ENCODE measurements at regions of chr12 and their contacts with region 1.

Region 1: DNA sequence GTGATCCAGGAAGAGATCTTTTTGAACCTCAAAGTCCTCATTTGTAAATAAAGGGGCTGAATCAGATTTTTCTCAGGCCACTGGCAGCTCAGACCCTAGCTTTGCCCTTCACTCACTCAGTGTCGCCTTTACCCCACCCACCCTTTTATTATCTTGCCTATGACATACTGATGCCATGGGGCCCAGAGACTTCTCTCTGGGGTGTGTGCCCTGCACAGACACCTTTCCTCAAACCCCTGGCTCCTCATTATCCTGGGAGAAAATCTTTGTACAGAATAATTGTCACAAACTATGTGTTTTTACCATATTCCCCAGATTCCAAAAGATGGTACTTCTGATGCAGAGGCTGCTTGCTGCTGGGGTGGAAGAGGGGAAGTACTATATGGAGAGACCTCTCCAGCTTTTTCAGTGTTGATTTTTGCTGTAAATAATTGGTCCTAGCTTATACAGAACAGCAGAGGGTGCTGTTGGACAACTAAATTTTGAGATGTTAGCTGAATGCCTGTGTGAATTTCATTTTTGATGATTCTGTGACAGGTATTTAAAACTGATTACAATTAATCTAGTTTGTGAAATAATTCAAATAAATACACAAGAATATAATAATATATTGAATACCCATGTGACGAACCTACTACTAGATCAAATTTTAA is 53.9 kb upstream of the DCD start:
- DNase-seq: no peak
- ATAC-seq: peak; percentile 80
- H3K4me3 ChIP-seq: no peak overlapping the region
- H3K27ac ChIP-seq: no peak overlapping the region
- H3K4me1 ChIP-seq: no peaks in the 10 kb centered on the region
- H3K27me3 ChIP-seq: no peaks in the 10 kb centered on the region; a peak in 3 of 4 replicates
- CTCF ChIP-seq: peak; percentile 49 to 64 (median 52); a peak in 4 of 6 replicates
- EP300 ChIP-seq: no peak
- POLR2A ChIP-seq: no peak
- RAD21 ChIP-seq: peak; percentile 68

Region 2: DNA sequence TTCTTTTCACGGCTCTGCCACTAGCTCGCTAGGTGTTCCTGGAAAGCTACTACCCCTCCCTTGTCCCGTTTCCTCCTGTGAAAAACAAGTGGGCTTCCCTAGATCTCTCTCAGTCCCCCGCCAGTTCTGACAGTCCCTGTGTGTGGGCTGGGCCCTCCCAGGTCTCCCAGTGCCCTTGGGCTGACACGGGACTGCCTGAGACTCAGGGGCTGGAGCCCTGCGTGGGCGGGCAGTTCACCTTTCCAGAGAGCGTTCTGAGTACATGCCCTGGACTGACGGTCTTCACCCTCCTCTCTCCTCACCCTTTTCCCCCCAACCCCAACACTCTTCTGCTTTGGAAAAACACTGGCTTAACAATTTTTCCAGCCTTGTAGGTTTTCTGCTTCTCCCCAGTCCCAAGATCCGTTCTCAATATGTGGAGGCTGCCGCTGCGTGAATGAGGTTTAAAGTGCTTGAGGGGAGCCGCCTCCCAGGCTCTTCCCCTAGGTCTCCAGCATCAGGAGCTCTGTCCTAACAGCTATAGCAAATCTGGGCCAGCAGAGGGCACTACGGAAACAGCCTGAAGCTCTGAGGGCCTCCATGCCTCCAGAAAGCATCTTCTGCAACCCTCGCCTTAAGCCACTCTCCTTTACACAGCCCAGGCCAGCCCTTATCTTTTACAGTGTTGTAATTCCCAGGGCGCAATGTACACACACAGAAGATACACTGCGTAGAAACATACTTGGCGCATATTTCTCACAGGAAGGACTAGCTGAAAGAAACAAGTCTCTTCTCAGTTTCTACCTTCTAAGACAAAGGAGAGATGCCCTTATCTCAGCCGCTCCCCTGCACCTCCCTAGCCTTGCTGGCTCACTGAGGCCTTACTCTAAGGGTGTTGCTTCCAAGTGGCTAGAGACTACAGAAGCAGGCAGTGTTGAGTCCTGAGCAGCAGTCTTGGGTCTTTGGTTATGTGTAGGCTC is 43.5 kb before region 1 on chr12:
- CTCF ChIA-PET with region 1: interaction called, 13 read pairs
- POLR2A ChIA-PET with region 1: no interaction called
- RAD21 ChIA-PET with region 1: interaction called, 15 read pairs
- SMC1A ChIA-PET with region 1: interaction called, 3 read pairs
- in situ Hi-C with region 1: no loop called
- intact Hi-C with region 1: no loop called
- DNase-seq: no peak
- ATAC-seq: peak; percentile 93
- H3K4me3 ChIP-seq: no peak overlapping the region
- H3K27ac ChIP-seq: no peak overlapping the region
- H3K4me1 ChIP-seq: no peaks in the 10 kb centered on the region
- H3K27me3 ChIP-seq: peaks cover 0 to 2% of the 10 kb centered on the region in 2 experiments; a peak in 2 of 4 replicates
- CTCF ChIP-seq: peak; percentile 68 to 81 (median 70)
- EP300 ChIP-seq: no peak
- POLR2A ChIP-seq: no peak
- RAD21 ChIP-seq: peak; percentile 51

Region 3: DNA sequence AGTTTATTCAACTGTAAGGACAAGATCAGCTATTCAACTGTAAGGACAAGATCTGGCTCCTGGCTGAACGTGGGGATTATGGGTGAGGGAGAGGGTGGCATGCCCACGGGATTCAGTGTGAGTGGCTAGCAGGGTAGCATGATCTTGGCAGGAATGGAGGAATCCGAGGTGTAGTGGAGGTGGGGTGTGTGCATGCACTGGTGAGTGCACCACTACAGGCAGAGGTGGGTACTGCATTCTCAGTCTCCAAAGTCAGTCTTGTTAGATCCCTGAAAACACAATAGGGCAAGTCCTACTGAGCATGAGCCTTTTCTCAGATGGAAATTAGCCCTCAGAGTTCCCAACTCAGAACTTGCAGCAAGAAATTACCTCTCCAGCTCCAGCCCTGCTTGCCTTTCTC is 21.7 kb before region 1 on chr12:
- CTCF ChIA-PET with region 1: interaction called, 26 read pairs
- POLR2A ChIA-PET with region 1: no interaction called
- RAD21 ChIA-PET with region 1: no interaction called
- SMC1A ChIA-PET with region 1: interaction called, 3 read pairs
- in situ Hi-C with region 1: no loop called
- intact Hi-C with region 1: no loop called
- DNase-seq: no peak
- ATAC-seq: peak; percentile 94
- H3K4me3 ChIP-seq: no peak overlapping the region
- H3K27ac ChIP-seq: no peak overlapping the region
- H3K4me1 ChIP-seq: no peaks in the 10 kb centered on the region
- H3K27me3 ChIP-seq: no peaks in the 10 kb centered on the region; a peak in 2 of 4 replicates
- CTCF ChIP-seq: peak; percentile 45 to 75 (median 55)
- EP300 ChIP-seq: no peak
- POLR2A ChIP-seq: no peak
- RAD21 ChIP-seq: no peak

Region 4: GRCh38 chr12:54689984-54690383 is 12.1 kb before region 1 on chr12:
- CTCF ChIA-PET with region 1: interaction called, 42 read pairs
- POLR2A ChIA-PET with region 1: no interaction called
- RAD21 ChIA-PET with region 1: interaction called, 3 read pairs
- SMC1A ChIA-PET with region 1: interaction called, 10 read pairs
- in situ Hi-C with region 1: no loop called
- intact Hi-C with region 1: no loop called
- DNase-seq: no peak
- ATAC-seq: peak; percentile 44; the same call in 2 of the 3 replicates
- H3K4me3 ChIP-seq: no peak overlapping the region
- H3K27ac ChIP-seq: no peak overlapping the region
- H3K4me1 ChIP-seq: no peaks in the 10 kb centered on the region
- H3K27me3 ChIP-seq: peaks cover 0 to 10% of the 10 kb centered on the region in 2 experiments; a peak in 2 of 4 replicates
- CTCF ChIP-seq: peak; percentile 9 to 24 (median 12); a peak in 3 of 6 replicates
- EP300 ChIP-seq: no peak
- POLR2A ChIP-seq: no peak
- RAD21 ChIP-seq: no peak

Region 5: DNA sequence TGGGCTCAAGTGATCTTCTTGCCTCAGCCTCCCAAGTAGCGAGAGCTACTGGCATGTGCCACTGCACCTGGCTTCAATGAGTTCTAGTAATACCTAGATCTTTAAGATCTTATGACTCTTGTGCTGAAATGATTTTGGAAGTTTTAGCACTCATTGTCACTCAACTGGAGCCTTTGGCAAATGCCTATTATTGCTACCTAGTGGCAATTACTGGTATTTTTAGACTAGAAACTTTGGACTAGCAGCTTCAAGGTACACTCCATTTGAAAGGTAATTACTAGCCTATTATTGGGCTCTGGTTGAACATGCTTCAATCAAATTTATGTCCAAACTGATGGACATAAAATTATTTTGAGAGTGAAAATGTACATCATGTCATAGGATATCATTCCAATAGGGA is 71.5 kb after region 1 on chr12:
- CTCF ChIA-PET with region 1: no interaction called
- POLR2A ChIA-PET with region 1: no interaction called
- RAD21 ChIA-PET with region 1: no interaction called
- SMC1A ChIA-PET with region 1: no interaction called
- in situ Hi-C with region 1: no loop called
- intact Hi-C with region 1: no loop called
- DNase-seq: no peak
- ATAC-seq: no peak
- H3K4me3 ChIP-seq: no peak overlapping the region
- H3K27ac ChIP-seq: no peak overlapping the region
- H3K4me1 ChIP-seq: no peaks in the 10 kb centered on the region
- H3K27me3 ChIP-seq: no peaks in the 10 kb centered on the region
- CTCF ChIP-seq: no peak
- EP300 ChIP-seq: no peak
- POLR2A ChIP-seq: no peak
- RAD21 ChIP-seq: no peak